ENCODE measurements at regions of chr3 and their contacts with region 1.

Region 1: DNA sequence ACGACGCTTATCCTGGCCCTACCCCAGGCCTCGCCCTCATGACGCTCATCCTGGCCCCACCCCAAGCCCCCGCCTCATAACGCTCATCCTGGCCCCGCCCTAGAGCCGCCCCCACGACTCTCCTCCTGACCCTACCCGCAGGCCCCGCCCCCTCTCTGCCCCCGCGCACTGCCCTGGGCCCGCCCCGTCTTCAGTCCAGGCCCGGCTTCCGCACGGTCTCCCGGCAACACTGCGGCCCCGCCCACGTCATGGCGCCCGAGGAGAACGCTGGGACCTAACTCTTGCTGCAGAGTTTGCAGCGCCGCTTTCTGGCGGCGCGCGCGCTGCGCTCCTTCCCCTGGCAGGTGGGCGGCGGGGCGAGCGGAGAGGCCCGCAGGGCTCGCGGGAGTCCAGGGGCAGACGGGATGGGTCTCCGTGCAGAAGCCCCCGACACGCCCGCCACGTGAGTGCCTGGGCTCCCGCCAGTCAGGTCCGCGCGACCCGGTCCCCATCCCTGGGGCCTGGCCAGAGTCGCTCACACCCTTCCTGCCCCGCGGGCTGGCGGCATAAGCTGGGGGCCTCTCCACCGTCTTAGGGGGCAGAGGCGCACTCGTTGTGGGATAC is 52.5 kb upstream of the ROPN1B start:
- DNase-seq: peak; percentile 65
- ATAC-seq: peak; percentile 97
- H3K4me3 ChIP-seq: peak overlapping the region; percentile 67
- H3K27ac ChIP-seq: peak overlapping the region; percentile 56
- H3K4me1 ChIP-seq: no peaks in the 10 kb centered on the region
- H3K27me3 ChIP-seq: no peaks in the 10 kb centered on the region
- CTCF ChIP-seq: peak; percentile 32 to 49 (median 43); a peak in 4 of 6 replicates
- EP300 ChIP-seq: no peak
- POLR2A ChIP-seq: peak; percentile 56
- RAD21 ChIP-seq: peak; percentile 59

Region 2: DNA sequence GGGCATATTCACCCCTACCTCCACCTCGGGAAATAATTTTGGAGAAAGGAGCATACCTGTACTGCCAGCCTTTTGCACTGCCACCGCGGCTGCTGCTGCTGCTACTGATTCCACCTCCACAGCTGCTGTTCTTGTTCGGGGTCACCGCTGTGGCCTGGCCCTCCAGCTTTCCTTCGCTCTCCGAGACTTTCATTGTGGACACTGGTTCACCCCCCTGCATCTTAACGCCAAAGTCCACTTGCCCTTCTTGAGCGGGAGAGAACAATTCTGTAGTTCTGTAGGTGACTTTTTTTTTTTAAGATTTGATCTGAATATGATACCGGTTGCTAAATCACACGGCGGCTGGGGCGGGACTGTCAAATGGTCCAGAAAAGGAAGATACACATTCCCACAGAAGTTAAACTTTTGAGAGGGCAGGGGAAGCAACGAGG is 321.9 kb before region 1 on chr3:
- CTCF ChIA-PET with region 1: no interaction called
- POLR2A ChIA-PET with region 1: no interaction called
- RAD21 ChIA-PET with region 1: no interaction called
- SMC1A ChIA-PET with region 1: no interaction called
- in situ Hi-C with region 1: loop called (anchors 10 kb)
- intact Hi-C with region 1: loop called (anchors 2 kb)
- DNase-seq: no peak
- ATAC-seq: 0 out of 3 replicates have a peak, but pooled peaks have one; percentile 2
- H3K4me3 ChIP-seq: peak overlapping the region; percentile 96
- H3K27ac ChIP-seq: peak overlapping the region; percentile 79
- H3K4me1 ChIP-seq: peaks cover 4% of the 10 kb centered on the region; the same call in 1 of the 2 replicates
- H3K27me3 ChIP-seq: no peaks in the 10 kb centered on the region
- CTCF ChIP-seq: no peak
- EP300 ChIP-seq: no peak
- POLR2A ChIP-seq: no peak
- RAD21 ChIP-seq: no peak

Region 3: DNA sequence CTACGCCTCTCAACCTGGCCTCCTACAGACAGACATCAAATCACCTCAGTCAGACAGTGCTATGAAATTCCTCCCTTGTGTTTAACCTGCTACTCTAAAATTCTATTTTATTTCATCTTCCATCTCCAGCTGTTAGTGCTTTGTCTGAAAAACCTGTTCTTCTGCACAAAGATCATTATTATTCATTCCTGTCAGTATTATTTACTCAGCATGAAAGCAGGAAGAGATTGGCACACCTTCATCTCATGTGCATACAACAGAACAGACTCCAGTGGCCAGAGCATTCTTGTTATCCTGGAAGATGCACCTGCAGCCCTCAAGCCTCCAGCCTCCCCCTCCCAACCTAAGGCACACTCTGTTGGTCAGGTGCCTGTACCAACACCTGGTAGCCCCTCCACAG is 50.7 kb after region 1 on chr3:
- CTCF ChIA-PET with region 1: no interaction called
- POLR2A ChIA-PET with region 1: no interaction called
- RAD21 ChIA-PET with region 1: no interaction called
- SMC1A ChIA-PET with region 1: no interaction called
- in situ Hi-C with region 1: no loop called
- intact Hi-C with region 1: no loop called
- DNase-seq: no peak
- ATAC-seq: no peak
- H3K4me3 ChIP-seq: no peak overlapping the region
- H3K27ac ChIP-seq: no peak overlapping the region
- H3K4me1 ChIP-seq: no peaks in the 10 kb centered on the region
- H3K27me3 ChIP-seq: peaks cover 0 to 4% of the 10 kb centered on the region in 2 experiments; a peak in 2 of 4 replicates
- CTCF ChIP-seq: no peak
- EP300 ChIP-seq: no peak
- POLR2A ChIP-seq: no peak
- RAD21 ChIP-seq: no peak

Region 4: DNA sequence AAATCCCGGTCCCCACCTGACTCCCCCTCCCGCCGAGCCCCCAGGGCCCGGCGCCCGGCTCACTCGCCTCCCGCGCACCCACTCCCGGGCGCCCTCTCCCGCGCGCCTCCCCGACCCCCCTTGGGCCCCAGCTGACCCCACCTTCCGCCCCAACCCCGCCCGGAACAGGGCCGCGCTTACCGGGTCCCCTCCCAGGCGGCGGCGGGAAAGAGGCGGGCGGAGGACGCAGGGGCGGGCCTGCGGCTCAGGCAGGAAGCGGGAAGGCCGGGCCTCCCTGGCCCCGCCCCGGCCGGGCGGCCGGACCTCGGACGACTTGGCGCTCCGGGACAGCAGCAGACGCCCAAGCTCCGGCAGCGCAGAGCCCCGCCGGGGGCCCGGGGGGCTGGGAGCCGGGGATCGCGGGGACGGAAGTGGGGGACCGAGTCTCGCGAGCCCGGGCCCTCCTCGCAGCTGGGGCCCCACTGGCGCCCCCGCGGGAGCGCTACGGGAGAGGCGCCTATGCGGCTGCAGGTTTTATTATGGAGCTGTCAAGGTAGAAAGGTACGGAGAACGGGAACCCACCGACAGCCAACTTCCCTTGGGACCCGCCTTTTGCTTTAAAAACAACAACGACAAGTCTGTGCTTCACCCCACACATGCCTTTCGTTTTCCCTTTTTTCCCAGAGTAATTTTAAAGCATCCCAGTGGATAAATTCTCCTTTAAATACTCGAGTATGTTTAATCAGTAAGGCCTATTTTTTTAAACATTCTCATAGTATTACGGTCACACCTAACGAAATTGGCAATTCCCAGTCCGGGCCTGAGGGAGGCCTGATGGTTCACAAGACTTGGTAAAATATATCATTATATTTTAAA is 167.7 kb after region 1 on chr3 and contains the start of gene SLC41A3:
- CTCF ChIA-PET with region 1: interaction called, 3 read pairs
- POLR2A ChIA-PET with region 1: no interaction called
- RAD21 ChIA-PET with region 1: no interaction called
- SMC1A ChIA-PET with region 1: no interaction called
- in situ Hi-C with region 1: no loop called
- intact Hi-C with region 1: loop called (anchors 10 kb)
- DNase-seq: peak; percentile 45
- ATAC-seq: peak; percentile 98
- H3K4me3 ChIP-seq: peak within 1 kb of the TSS; percentile 71
- H3K27ac ChIP-seq: peak within 1 kb of the TSS; percentile 39
- H3K4me1 ChIP-seq: no peaks in the 10 kb centered on the region
- H3K27me3 ChIP-seq: peaks cover 0 to 2% of the 10 kb centered on the region in 2 experiments; a peak in 1 of 4 replicates
- CTCF ChIP-seq: peak; percentile 41 to 54 (median 41); a peak in 5 of 6 replicates
- EP300 ChIP-seq: no peak
- POLR2A ChIP-seq: peak; percentile 67
- RAD21 ChIP-seq: no peak
- polyA plus RNA-seq, gene SLC41A3: 8.3 to 13.9 TPM

Region 5: GRCh38 chr3:126340081-126340511 is 423.6 kb after region 1 on chr3:
- CTCF ChIA-PET with region 1: no interaction called
- POLR2A ChIA-PET with region 1: no interaction called
- RAD21 ChIA-PET with region 1: no interaction called
- SMC1A ChIA-PET with region 1: no interaction called
- in situ Hi-C with region 1: no loop called
- intact Hi-C with region 1: no loop called
- DNase-seq: no peak
- ATAC-seq: no peak
- H3K4me3 ChIP-seq: no peak overlapping the region
- H3K27ac ChIP-seq: no peak overlapping the region
- H3K4me1 ChIP-seq: no peaks in the 10 kb centered on the region
- H3K27me3 ChIP-seq: no peaks in the 10 kb centered on the region; a peak in 1 of 4 replicates
- CTCF ChIP-seq: no peak
- EP300 ChIP-seq: no peak
- POLR2A ChIP-seq: no peak
- RAD21 ChIP-seq: no peak

Region 6: GRCh38 chr3:126475413-126476114 is 559.1 kb after region 1 on chr3 and contains the start of gene ZXDC:
- CTCF ChIA-PET with region 1: no interaction called
- POLR2A ChIA-PET with region 1: no interaction called
- RAD21 ChIA-PET with region 1: no interaction called
- SMC1A ChIA-PET with region 1: no interaction called
- in situ Hi-C with region 1: loop called (anchors 10 kb)
- intact Hi-C with region 1: no loop called
- DNase-seq: peak; percentile 70
- ATAC-seq: peak; percentile 91
- H3K4me3 ChIP-seq: peak within 1 kb of the TSS; percentile 75
- H3K27ac ChIP-seq: peak within 1 kb of the TSS; percentile 61
- H3K4me1 ChIP-seq: peaks cover 9% of the 10 kb centered on the region; the same call in 1 of the 2 replicates
- H3K27me3 ChIP-seq: no peaks in the 10 kb centered on the region
- CTCF ChIP-seq: peak; percentile 37 to 65 (median 56); a peak in 5 of 6 replicates
- EP300 ChIP-seq: no peak
- POLR2A ChIP-seq: peak; percentile 89
- RAD21 ChIP-seq: peak; percentile 49; the same call in 1 of the 2 replicates
- polyA plus RNA-seq, gene ZXDC: 0.72 to 1.2 TPM

Measured in GM12878 (cell line).